CD14-positive monocyte (primary cell): ENCODE measurements at regions of chr18 and their contacts with region 1.

Region 1: DNA sequence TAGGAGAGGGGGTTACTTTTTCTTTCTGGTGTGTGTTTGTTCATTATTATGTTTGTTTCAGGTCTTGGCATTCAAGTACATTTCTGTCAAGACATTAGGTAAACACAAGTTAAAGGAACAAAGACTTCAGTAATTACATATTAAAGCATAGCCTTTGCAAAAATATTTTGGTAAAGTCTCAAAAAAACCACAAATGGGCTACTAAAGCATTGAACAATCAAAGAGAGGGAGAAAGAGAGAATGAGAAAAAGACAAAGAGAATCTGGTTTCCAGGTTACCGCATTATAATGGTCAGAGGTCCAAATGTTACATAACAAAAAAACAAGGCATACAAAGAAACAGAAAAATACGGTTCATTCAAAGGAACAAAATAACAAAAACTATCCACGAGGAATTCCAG is 328.0 kb downstream of the AKAIN1 start:
- DNase-seq: no peak
- H3K4me3 ChIP-seq: no peak overlapping the region
- H3K4me3 Mint-ChIP-seq: no peak overlapping the region
- H3K27ac ChIP-seq: no peak overlapping the region
- H3K27ac Mint-ChIP-seq: no peak overlapping the region
- H3K4me1 ChIP-seq: no peaks in the 10 kb centered on the region
- H3K4me1 Mint-ChIP-seq: no peaks in the 10 kb centered on the region
- H3K27me3 ChIP-seq: no peaks in the 10 kb centered on the region
- H3K27me3 Mint-ChIP-seq: no peaks in the 10 kb centered on the region
- CTCF ChIP-seq: no peak

Region 2: GRCh38 chr18:4734021-4734420 is 135.1 kb before region 1 on chr18:
- intact Hi-C with region 1: no loop called
- DNase-seq: no peak
- H3K4me3 ChIP-seq: no peak overlapping the region
- H3K4me3 Mint-ChIP-seq: no peak overlapping the region
- H3K27ac ChIP-seq: no peak overlapping the region
- H3K27ac Mint-ChIP-seq: no peak overlapping the region
- H3K4me1 ChIP-seq: no peaks in the 10 kb centered on the region
- H3K4me1 Mint-ChIP-seq: no peaks in the 10 kb centered on the region
- H3K27me3 ChIP-seq: no peaks in the 10 kb centered on the region
- H3K27me3 Mint-ChIP-seq: no peaks in the 10 kb centered on the region
- CTCF ChIP-seq: no peak

Region 3: GRCh38 chr18:4908328-4908727 is 39.2 kb after region 1 on chr18:
- intact Hi-C with region 1: loop called in 1 of 2 experiments (anchors 10 kb)
- DNase-seq: no peak
- H3K4me3 ChIP-seq: no peak overlapping the region
- H3K4me3 Mint-ChIP-seq: no peak overlapping the region
- H3K27ac ChIP-seq: no peak overlapping the region
- H3K27ac Mint-ChIP-seq: no peak overlapping the region
- H3K4me1 ChIP-seq: no peaks in the 10 kb centered on the region
- H3K4me1 Mint-ChIP-seq: no peaks in the 10 kb centered on the region
- H3K27me3 ChIP-seq: no peaks in the 10 kb centered on the region
- H3K27me3 Mint-ChIP-seq: peaks cover 0 to 3% (median 0%) of the 10 kb centered on the region in 3 donors
- CTCF ChIP-seq: no peak

Region 4: DNA sequence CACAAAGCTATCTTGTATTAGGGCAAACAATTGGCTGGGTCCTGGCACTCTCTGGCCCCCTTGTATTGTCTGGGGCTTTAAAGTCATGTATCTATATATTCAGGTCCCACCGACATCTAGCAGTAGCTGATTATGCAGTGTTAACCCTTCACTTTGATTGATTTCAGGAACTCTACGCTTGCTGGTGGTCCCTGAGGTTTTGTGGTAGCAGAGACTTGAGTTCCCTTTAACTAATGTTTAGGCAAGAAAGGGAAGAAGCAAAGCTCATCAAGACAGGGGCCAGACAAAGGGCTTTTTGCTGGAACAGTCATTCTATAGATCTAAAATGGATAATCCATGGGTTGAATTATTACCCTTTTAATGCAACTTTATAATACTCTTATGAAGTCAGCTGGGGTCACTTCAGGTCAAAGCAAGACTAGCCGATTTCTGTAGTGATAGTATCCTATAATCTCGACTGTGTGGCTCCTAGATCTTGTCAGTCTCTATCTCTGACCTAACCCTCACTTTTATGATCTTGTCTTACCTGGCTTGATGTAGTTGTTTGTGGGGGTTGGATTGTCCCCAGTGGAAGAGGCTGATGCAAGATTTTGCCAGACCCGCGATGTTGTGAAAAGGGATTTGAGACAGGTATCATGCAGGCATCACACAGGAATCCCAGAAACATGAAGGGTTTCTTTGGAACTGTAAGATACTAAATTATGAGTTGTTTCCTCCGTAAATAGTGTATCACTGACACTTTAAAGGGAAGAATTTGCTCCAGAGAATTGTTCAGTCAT is 770.2 kb after region 1 on chr18:
- intact Hi-C with region 1: no loop called
- DNase-seq: no peak
- H3K4me3 ChIP-seq: no peak overlapping the region
- H3K4me3 Mint-ChIP-seq: no peak overlapping the region
- H3K27ac ChIP-seq: no peak overlapping the region
- H3K27ac Mint-ChIP-seq: no peak overlapping the region
- H3K4me1 ChIP-seq: no peaks in the 10 kb centered on the region
- H3K4me1 Mint-ChIP-seq: no peaks in the 10 kb centered on the region
- H3K27me3 ChIP-seq: peaks cover 12 to 16% of the 10 kb centered on the region in 2 donors
- H3K27me3 Mint-ChIP-seq: peaks cover 7 to 12% (median 11%) of the 10 kb centered on the region in 3 donors
- CTCF ChIP-seq: no peak